Left ventricle myocardium inferior (tissue), 1 donor: ENCODE measurements at regions of chr13 and their contacts with region 1.

Region 1: GRCh38 chr13:26062844-26063444 is 11.1 kb upstream of the SHISA2 start:
- DNase-seq: no peak
- H3K4me3 ChIP-seq: no peak overlapping the region
- H3K27ac ChIP-seq: no peak overlapping the region
- H3K4me1 ChIP-seq: no peaks in the 10 kb centered on the region
- H3K27me3 ChIP-seq: peaks cover 34% of the 10 kb centered on the region
- CTCF ChIP-seq: peak; percentile 79

Region 2: GRCh38 chr13:25493931-25494640 is 568.9 kb before region 1 on chr13:
- intact Hi-C with region 1: no loop called
- DNase-seq: no peak
- H3K4me3 ChIP-seq: no peak overlapping the region
- H3K27ac ChIP-seq: no peak overlapping the region
- H3K4me1 ChIP-seq: no peaks in the 10 kb centered on the region
- H3K27me3 ChIP-seq: peaks cover 82% of the 10 kb centered on the region
- CTCF ChIP-seq: no peak

Region 3: GRCh38 chr13:25585000-25585399 is 477.9 kb before region 1 on chr13:
- intact Hi-C with region 1: loop called (anchors 5 kb)
- DNase-seq: no peak
- H3K4me3 ChIP-seq: no peak overlapping the region
- H3K27ac ChIP-seq: no peak overlapping the region
- H3K4me1 ChIP-seq: no peaks in the 10 kb centered on the region
- H3K27me3 ChIP-seq: peaks cover 71% of the 10 kb centered on the region
- CTCF ChIP-seq: no peak

Region 4: GRCh38 chr13:25990809-25991208 is 72.1 kb before region 1 on chr13:
- intact Hi-C with region 1: no loop called
- DNase-seq: no peak
- H3K4me3 ChIP-seq: no peak overlapping the region
- H3K27ac ChIP-seq: no peak overlapping the region
- H3K4me1 ChIP-seq: no peaks in the 10 kb centered on the region
- H3K27me3 ChIP-seq: peaks cover 18% of the 10 kb centered on the region
- CTCF ChIP-seq: no peak

Region 5: GRCh38 chr13:26208287-26208686 is 145.3 kb after region 1 on chr13:
- intact Hi-C with region 1: no loop called
- DNase-seq: no peak
- H3K4me3 ChIP-seq: no peak overlapping the region
- H3K27ac ChIP-seq: no peak overlapping the region
- H3K4me1 ChIP-seq: peaks cover 15% of the 10 kb centered on the region
- H3K27me3 ChIP-seq: no peaks in the 10 kb centered on the region
- CTCF ChIP-seq: no peak

Region 6: DNA sequence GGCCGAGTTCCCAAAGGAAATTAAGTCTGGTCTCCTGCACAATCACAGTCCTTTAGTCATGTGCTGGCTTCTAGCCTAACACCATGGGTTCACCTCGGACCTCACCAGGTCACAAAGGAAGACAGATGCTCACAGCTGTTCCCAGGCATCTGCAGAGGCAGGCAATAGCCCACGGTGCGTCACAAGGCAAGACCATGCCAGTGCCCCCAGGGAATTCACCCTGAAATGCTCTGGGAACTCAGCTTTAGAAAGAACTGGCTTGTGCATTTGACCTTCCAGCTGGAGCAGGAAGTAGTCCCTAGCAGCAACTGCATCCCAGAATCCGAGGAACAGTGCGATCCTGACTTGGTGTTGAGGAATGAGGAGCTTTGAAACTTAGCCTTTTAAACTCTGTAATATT is 397.7 kb after region 1 on chr13:
- intact Hi-C with region 1: no loop called
- DNase-seq: peak; percentile 87
- H3K4me3 ChIP-seq: no peak overlapping the region
- H3K27ac ChIP-seq: peak overlapping the region; percentile 89
- H3K4me1 ChIP-seq: peaks cover 26% of the 10 kb centered on the region
- H3K27me3 ChIP-seq: peaks cover 34% of the 10 kb centered on the region
- CTCF ChIP-seq: no peak